ENCODE measurements at regions of chr12 and their contacts with region 1.

Region 1: GRCh38 chr12:25965682-25966081 is 7.2 kb downstream of the RASSF8 start:
- DNase-seq: no peak
- ATAC-seq: no peak

Region 2: DNA sequence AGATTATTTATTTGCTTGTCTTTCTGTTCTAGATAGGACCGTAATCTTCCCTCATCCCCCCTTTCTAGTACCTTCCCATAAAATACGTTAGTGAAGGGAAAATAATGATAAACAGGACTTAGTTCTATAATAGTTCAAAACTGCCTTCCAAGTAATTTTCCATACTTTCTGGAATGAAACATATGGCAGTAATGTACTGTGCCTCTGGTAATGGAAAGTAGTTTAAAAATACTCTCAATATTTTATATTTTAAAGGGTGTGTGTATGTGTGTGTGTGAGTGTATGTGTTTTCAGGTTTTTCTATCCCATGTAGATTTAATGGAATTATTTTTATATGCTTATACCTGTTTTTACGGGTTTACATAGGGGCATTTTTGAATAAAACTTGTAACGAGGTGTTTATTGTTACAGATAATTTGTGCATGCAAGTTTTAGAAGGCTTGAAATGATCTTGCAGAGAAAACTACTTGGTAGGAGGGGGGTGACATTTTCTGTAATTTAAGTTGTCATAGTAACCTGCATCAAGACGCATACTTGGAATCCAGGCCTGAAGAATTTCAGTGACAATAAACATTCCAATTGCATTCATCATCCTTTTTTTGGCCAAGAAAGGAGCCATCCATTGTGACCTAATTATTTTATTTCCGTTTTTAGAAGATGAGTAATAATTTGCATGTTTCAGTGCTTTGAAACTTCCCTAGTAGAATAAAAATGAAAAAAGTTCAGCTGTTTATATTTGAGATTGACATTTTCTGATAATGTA is 31.7 kb after region 1 on chr12:
- intact Hi-C with region 1: no loop called
- DNase-seq: no peak
- ATAC-seq: peak; percentile 56

Region 3: GRCh38 chr12:27710592-27711316 is 1745.1 kb after region 1 on chr12 and contains the start of gene MRPS35:
- intact Hi-C with region 1: loop called (anchors 5 kb)
- DNase-seq: peak; percentile 95
- ATAC-seq: peak; percentile 99
- total RNA-seq, gene MRPS35: 28.0 TPM

Measured in sciatic nerve (tissue), 2 donors.